ENCODE measurements at regions of chr17 and their contacts with region 1.

Region 1: DNA sequence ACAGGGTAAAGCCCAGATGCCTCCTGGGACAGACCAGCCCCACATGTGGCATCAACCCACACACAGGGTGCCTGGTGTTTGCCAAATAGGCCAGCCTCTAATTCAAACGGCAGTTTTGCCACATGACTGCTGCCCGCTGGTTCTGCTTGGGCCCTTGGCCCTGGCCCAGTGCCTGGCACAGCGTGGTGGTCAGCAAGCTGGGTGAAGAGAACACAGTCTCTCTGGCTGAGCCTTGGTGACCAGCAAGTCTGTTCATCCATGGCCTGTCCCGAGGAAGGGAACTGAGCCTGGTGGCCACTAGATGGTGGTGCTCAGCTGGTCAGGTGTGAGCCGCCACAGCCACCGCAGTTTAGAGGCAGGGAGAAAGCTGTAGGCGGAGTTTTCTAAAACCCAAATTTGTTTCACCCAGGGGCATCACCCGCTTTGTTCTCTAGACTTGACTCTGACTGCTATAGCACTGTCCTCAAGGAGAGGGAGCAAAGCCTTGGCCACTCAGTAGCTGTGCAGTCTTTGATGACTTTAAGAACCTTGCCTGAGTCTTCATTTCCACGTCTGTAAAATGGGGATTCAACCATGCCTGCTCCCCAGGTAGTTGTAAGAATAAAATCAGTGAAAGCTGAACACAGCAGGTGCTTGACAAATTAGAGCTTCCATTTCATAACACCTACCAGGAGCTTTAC is 4.7 kb upstream of the GFAP start:
- DNase-seq: no peak
- H3K4me3 ChIP-seq: no peak overlapping the region
- H3K27ac ChIP-seq: no peak overlapping the region
- H3K4me1 ChIP-seq: peaks cover 12% of the 10 kb centered on the region
- H3K27me3 ChIP-seq: no peaks in the 10 kb centered on the region
- CTCF ChIP-seq: peak; percentile 75 to 87 (median 85)
- POLR2A ChIP-seq: no peak

Region 2: GRCh38 chr17:44829523-44830358 is 90.3 kb before region 1 on chr17 and contains the start of gene GJC1:
- intact Hi-C with region 1: no loop called
- DNase-seq: no peak
- H3K4me3 ChIP-seq: peak within 1 kb of the TSS; percentile 55 to 62
- H3K27ac ChIP-seq: peak within 1 kb of the TSS; percentile 76
- H3K4me1 ChIP-seq: peaks cover 12% of the 10 kb centered on the region
- H3K27me3 ChIP-seq: no peaks in the 10 kb centered on the region
- CTCF ChIP-seq: no peak
- POLR2A ChIP-seq: peak in 1 of 2 donors; percentile 29
- total RNA-seq, gene GJC1: 10.1 TPM

Region 3: DNA sequence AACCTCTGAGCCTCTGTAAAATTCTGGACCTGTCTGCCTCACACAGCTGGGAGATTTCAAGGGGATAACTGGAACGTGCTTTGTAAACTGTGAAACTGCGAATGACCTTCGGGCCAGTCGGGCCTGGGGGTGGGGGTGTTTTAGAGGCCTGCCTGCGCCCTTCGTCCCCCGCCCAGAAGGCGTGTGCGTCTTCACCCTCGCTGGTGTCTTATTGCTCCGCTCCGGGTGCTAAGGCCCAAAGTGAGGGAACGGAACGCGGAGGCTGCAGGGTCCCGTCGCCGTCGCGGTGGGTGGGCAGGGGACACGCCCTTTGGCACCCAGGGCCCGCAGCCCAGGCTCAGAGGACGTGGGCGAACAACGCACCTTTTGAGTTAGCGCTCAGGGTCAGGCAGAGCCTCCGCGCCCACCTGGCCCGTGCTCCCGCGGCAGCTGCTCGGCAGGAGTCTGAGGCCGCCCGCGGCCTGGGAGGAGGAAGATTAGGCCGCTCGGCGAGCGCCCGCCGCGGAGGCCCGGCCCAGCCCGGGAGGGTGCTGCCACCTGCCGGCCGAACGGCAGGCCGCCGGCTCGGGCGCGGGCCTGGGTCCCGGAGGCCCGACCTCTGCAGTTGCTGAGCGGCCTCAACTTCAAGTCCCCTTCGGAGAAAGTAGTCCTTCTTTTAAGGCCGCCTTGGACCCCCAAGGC is 101.7 kb after region 1 on chr17:
- intact Hi-C with region 1: loop called (anchors 2 kb)
- DNase-seq: no peak
- H3K4me3 ChIP-seq: peak overlapping the region; percentile 29 to 46
- H3K27ac ChIP-seq: peak overlapping the region; percentile 86
- H3K4me1 ChIP-seq: peaks cover 50% of the 10 kb centered on the region
- H3K27me3 ChIP-seq: no peaks in the 10 kb centered on the region
- CTCF ChIP-seq: peak; percentile 52 to 97 (median 75)
- POLR2A ChIP-seq: no peak

Region 4: GRCh38 chr17:45108595-45109521 is 188.8 kb after region 1 on chr17:
- intact Hi-C with region 1: loop called (anchors 10 kb)
- DNase-seq: no peak
- H3K4me3 ChIP-seq: no peak overlapping the region
- H3K27ac ChIP-seq: no peak overlapping the region
- H3K4me1 ChIP-seq: peaks cover 38% of the 10 kb centered on the region
- H3K27me3 ChIP-seq: no peaks in the 10 kb centered on the region
- CTCF ChIP-seq: no peak
- POLR2A ChIP-seq: no peak

Region 5: DNA sequence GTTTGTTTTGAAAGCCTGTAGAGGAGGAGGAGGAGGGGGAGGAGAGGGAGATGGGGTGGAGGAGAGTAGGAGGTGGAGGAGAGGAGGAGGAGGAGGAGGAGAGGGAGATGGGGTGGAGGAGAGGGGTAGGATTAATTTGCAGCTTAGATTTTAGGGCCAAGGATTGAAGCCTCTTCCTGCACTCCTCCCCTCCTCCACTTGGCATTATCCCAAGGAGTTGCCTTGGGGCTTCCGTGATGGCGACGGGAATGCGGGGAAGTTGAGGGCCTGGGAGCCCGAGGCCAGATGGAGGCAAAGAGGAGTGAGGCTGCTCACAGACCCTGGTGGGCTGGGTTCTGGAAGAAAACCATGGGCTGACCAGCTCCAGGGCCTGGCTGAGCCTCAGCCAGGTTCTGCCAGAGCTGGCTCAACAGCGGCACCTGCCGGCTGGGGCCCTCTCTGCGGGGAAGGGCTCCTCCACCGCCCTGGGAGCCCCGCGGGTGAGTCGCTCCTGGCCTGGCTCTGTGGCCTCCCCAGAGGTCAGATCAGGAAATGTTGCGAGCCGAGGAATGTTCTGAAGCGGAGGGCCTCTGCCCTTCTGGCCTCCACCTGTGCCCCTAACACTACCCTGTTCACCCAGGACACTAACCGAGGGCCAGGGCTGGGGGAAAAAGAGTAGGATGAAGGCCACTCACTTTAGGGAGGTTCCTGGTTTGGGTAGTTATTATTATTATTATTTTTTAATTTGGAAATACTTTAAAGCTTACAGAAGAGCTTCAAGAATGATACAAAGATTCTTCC is 277.7 kb after region 1 on chr17:
- intact Hi-C with region 1: loop called (anchors 10 kb)
- DNase-seq: no peak
- H3K4me3 ChIP-seq: no peak overlapping the region
- H3K27ac ChIP-seq: peak overlapping the region; percentile 75
- H3K4me1 ChIP-seq: peaks cover 33% of the 10 kb centered on the region
- H3K27me3 ChIP-seq: no peaks in the 10 kb centered on the region
- CTCF ChIP-seq: peak; percentile 83 to 99 (median 99)
- POLR2A ChIP-seq: no peak